OCI-LY7 (cell line): ENCODE measurements at regions of chr22 and their contacts with region 1.

Region 1: DNA sequence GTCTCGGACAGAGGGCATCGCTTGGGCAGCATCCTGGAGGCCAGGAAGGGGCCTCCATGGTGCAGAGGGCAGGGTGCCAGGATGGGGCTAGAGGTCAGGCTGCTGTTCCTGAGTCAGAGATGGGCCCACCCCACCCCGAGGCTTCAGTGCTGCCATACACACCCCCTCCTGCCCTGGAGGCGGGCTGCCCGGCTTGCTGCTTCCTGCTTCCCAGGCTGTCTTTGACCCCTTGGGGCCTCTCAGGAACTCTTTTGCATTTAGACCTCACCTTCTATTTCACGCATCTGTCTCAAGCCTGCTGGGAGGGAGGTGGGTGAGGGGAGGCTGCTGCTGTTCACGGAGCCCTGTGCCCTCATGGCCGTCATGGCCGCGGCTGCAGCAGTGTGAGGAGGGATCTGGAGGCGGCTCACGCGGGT is 6.6 kb upstream of the GRAMD4 start:
- DNase-seq: peak; percentile 78
- H3K4me3 ChIP-seq: peak overlapping the region; percentile 71
- H3K27ac ChIP-seq: peak overlapping the region; percentile 82
- H3K4me1 ChIP-seq: peaks cover 28% of the 10 kb centered on the region
- CTCF ChIP-seq: no peak

Region 2: GRCh38 chr22:46592390-46592872 is 21.2 kb before region 1 on chr22:
- CTCF ChIA-PET with region 1: interaction called, 3 read pairs
- POLR2A ChIA-PET with region 1: interaction called, 5 read pairs
- intact Hi-C with region 1: loop called (anchors 1 kb)
- DNase-seq: peak; percentile 82
- H3K4me3 ChIP-seq: peak overlapping the region; percentile 49
- H3K27ac ChIP-seq: peak overlapping the region; percentile 87
- H3K4me1 ChIP-seq: peaks cover 65% of the 10 kb centered on the region
- CTCF ChIP-seq: no peak

Region 3: DNA sequence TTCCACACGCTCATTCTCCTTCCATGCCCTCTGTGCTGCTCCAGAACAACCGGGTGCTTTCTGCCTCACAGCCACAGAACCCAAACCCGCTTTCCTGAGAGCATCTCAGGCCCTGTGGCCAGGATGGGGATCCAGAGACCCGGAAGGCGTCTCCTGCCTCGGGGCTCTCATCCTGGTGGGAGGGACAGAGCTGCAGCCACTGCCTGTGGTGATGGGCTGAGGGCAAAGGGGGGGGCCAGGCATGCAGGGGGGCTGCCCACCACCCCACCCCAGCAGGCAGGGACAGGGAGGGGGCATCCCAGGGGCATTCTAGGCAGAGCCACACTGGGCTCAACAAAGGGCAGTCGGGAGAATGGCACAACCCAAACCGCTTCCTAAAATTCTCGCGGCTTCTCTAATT is 83.0 kb after region 1 on chr22:
- CTCF ChIA-PET with region 1: no interaction called
- POLR2A ChIA-PET with region 1: no interaction called
- intact Hi-C with region 1: no loop called
- DNase-seq: no peak
- H3K4me3 ChIP-seq: no peak overlapping the region
- H3K27ac ChIP-seq: no peak overlapping the region
- H3K4me1 ChIP-seq: no peaks in the 10 kb centered on the region
- CTCF ChIP-seq: no peak

Region 4: DNA sequence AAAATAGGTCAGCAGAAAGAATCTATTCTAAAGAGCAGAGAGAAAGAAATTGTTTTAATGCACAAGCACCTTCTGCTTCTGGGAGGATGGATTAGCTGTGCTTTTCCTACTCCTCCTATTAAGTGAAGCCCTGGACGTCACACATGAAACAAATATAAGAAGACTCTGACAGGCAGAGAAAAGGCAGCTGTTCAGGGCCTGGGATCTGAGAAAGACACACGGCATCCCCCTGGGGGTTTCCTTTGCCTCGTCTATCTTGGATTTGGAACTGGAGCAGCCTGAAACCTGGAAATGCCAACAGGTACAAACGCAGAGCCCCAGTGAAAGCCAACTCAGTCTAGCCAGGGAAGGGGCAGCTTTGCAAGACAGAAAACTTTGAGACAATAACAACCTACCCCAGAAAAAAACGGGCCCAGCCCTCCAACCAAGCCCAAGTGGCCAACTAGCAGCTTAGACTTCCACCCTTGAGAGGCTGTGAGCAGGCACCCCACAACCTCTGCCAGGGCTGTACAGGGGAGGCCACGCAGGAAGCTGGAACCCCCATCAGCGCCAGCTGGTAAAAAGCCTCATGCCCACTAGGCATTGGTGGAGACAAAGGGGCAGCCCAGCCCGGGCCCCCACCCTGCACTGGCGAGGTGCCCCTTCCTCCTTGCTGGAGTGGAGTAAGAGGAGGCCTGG is 117.1 kb after region 1 on chr22:
- CTCF ChIA-PET with region 1: no interaction called
- POLR2A ChIA-PET with region 1: no interaction called
- intact Hi-C with region 1: no loop called
- DNase-seq: no peak
- H3K4me3 ChIP-seq: no peak overlapping the region
- H3K27ac ChIP-seq: no peak overlapping the region
- H3K4me1 ChIP-seq: peaks cover 33% of the 10 kb centered on the region
- CTCF ChIP-seq: no peak